AG04449 (cell line): ENCODE measurements at regions of chr20 and their contacts with region 1.

Region 1: DNA sequence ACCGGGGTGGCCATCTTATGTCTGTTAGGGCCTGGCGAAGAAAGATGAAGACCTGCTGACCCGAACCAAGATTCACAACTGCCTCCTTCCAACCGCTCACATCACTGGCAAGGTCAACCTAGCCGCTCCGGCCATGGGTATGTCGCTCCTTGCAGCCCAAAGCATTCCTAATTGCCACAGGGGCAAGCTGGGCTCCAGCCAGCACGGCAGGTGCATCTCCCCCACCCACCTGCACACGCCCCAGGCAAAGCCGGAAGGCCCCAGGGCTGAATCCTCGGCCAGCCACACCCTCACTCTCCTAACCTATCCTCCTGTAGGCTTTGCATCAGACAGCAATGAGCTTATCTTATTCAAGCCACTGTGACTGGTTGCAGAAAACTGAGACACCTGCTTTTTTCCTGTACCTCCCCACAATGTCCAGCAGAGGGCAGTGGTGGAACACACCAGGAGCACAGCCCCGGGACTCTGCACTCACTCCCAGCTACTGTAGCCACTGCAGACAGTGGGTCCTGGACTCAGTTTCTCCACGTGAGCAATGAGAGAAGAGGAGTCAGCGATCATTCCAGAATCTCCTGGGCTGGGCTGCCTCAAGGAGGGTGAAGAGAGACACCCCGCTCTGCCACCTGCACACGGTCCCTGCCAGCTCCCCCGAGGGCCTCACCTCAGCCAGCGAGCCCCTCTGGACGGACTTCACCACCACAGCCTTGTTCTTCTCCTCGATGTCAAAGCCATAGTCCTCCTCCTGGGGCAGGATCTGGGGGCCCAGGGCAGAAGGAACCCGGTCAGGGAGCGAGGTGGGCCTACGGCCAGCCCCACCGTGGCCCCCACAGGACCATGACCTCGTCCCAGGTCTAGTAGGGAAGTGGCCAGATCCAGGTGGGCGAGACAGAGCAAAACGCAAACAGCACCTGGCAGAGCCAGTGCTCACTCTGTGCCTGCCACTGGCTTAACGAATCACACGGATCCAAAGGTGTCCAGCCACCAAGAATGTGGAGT is 170.0 kb downstream of the PREX1 start:
- DNase-seq: peak; percentile 19
- H3K4me3 ChIP-seq: no peak overlapping the region
- CTCF ChIP-seq: peak; percentile 87

Region 2: DNA sequence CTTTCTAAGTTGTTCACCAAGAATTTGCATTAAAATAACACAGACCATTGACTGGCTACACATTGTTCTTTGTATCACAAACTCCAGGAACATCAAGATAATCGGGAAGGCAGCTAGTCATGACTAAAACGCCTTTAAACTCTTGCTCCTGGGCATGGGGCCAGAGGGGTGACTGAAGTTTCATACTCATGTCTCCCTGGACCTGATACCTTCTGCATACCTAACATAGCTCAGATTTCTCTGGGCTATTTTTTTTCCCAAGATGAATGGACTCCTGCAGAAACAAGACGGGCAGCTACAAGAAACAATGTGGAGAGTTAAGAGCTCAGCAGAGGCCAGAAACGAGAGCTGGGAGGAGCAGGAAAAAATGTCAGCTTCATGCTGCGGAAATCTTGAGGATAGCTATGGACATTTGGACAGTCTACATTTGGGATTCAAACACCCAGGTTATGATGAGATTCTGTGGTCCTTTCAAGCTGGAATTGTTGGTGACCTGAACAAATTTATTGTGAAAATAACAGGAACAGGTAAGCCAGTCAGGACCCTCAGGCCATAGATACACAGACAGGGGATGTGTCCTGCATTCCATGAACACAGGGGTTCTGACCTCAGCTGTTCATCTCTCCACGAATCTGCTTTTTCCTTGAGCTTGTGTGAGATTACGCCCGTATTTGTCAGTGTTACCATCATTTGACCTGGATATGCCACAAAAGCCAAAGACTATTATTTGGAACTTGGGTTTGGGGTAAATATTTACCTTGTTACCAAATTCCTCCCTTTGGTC is 119.2 kb before region 1 on chr20:
- CTCF ChIA-PET with region 1: no interaction called
- POLR2A ChIA-PET with region 1: no interaction called
- DNase-seq: peak; percentile 23
- H3K4me3 ChIP-seq: no peak overlapping the region
- CTCF ChIP-seq: no peak

Region 3: DNA sequence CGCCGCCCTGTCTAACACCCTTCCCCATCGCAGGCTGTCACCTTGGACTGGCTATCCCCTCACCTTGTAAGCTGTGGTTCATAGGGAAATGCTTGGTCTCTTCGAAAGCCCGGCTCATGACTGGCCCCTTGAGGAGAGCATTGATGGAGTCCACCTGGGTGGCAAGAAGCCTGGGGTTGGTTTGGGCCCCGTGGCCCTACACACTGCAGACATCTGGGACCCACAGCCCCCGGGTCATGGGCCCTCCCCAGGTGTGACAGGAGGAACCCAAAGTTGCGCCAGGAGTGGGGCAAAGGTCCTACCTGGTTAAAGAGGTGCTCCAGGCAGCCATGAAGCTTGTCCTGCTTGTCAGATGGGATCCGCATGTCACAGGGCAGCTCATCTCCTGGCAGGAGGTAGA is 15.7 kb before region 1 on chr20:
- CTCF ChIA-PET with region 1: interaction called, 35 read pairs
- POLR2A ChIA-PET with region 1: no interaction called
- DNase-seq: no peak
- H3K4me3 ChIP-seq: no peak overlapping the region
- CTCF ChIP-seq: no peak

Region 4: DNA sequence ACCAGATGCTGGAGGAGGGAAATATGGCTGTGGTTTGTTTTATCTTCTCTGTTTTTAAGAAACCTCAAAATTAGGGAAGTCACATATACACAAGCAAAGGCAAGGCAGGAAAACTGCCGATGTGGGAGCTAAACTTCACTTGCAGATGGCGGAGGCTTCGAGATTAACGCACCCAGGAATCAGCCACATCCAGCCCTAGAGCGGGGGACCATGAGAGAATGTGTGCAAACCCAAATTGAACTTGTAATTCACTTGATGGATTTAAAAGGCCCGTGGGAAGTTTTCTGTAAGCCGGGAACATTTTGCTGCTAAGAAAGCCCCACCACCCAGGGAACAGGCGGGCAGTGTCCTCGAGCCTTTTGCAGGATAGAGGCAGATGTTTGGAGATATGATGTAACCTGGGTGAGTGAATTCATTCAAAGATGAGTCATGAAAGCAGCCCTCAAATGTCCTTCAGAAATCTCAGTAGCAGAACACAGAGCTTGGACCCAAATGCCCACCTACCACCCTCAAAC is 130.1 kb after region 1 on chr20:
- CTCF ChIA-PET with region 1: interaction called, 10 read pairs
- POLR2A ChIA-PET with region 1: no interaction called
- DNase-seq: no peak
- H3K4me3 ChIP-seq: no peak overlapping the region
- CTCF ChIP-seq: no peak

Region 5: GRCh38 chr20:48904365-48905296 is 246.9 kb after region 1 on chr20:
- CTCF ChIA-PET with region 1: interaction called, 534 read pairs
- POLR2A ChIA-PET with region 1: no interaction called
- DNase-seq: no peak
- H3K4me3 ChIP-seq: no peak overlapping the region
- CTCF ChIP-seq: peak; percentile 51